ENCODE measurements at regions of chr1 and their contacts with region 1.

Region 1: DNA sequence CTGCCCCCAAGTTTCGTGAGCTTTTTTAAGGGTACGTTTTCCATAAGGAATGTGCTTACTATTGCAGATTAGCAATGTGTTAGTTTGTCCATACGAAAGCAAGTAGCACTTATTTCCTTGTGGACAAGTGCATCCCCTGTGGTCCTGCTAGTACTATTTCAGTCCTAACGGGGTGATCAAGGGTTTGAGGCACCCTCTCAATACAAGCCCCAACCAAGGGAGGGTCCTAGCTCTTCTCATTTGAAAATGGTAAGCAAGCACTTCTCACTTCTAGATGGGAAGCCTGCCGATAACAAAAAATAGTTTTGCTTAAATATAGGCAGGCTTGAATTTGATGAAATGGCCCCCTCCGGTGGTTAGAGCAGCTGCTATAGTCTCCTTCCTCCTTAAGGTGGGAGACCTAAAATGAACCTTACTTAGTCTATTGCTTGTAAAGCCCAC is 64.0 kb upstream of the HMCN1 start:
- DNase-seq: peak in 2 of 3 donors; percentile 29 to 68
- ATAC-seq: peak; percentile 52 to 65
- H3K4me3 ChIP-seq: no peak overlapping the region
- H3K27ac ChIP-seq: no peak overlapping the region
- H3K4me1 ChIP-seq: peaks cover 3% of the 10 kb centered on the region
- H3K27me3 ChIP-seq: no peaks in the 10 kb centered on the region

Region 2: DNA sequence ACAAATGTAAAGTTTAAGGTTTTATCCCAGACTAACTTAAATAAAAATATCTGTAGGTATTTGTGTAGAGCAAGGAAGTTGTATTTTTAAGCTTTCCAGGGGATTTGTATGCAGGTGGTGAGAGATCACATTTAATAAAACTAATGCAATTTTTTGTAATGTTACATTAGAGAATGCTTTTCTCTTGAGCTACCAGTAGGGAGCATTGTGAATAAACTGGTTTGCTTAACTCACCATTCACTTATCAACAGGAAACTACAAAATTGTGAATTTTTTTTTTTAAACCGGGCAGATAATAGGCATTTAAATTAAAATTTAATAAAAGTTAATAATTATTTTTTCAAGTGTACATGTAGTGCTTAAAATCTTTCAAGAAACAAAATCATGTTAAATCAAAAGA is 431.8 kb before region 1 on chr1:
- intact Hi-C with region 1: loop called in 2 of 4 experiments (anchors 10 kb)
- DNase-seq: no peak
- ATAC-seq: no peak
- H3K4me3 ChIP-seq: no peak overlapping the region
- H3K27ac ChIP-seq: no peak overlapping the region
- H3K4me1 ChIP-seq: no peaks in the 10 kb centered on the region
- H3K27me3 ChIP-seq: no peaks in the 10 kb centered on the region

Region 3: GRCh38 chr1:185244015-185244747 is 426.0 kb before region 1 on chr1:
- intact Hi-C with region 1: loop called in 2 of 4 experiments (anchors 10 kb)
- DNase-seq: no peak
- ATAC-seq: no peak
- H3K4me3 ChIP-seq: no peak overlapping the region
- H3K27ac ChIP-seq: no peak overlapping the region
- H3K4me1 ChIP-seq: no peaks in the 10 kb centered on the region
- H3K27me3 ChIP-seq: no peaks in the 10 kb centered on the region

Region 4: GRCh38 chr1:185317034-185317885 is 352.9 kb before region 1 on chr1 and contains the start of gene IVNS1ABP:
- intact Hi-C with region 1: loop called in 2 of 4 experiments (anchors 5 to 10 kb)
- DNase-seq: peak; percentile 95 to 98 (median 97)
- ATAC-seq: peak; percentile 94 to 95
- H3K4me3 ChIP-seq: peak within 1 kb of the TSS; percentile 64
- H3K27ac ChIP-seq: peak within 1 kb of the TSS; percentile 92
- H3K4me1 ChIP-seq: no peaks in the 10 kb centered on the region
- H3K27me3 ChIP-seq: no peaks in the 10 kb centered on the region
- total RNA-seq, gene IVNS1ABP: 36.7 to 37.4 (median 37.1) TPM

Region 5: DNA sequence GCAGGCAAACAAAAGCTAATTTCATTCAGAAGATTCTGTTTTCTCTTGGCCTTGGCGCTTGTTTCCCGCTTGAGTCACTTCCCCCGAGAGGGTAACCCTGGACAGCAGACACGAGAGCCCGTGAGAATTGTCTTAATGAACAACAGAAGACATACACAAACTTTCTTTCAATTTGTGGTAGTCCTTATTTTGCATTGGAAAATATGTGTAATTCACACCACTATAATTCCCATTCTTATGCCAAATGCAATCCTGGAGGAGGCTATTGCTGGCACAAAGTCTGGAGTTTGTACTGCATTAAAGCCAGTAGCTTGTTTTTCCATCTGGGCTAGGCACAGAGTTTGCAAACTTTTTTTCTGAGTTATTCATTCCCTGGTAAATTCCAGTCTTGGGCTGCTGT is 243.4 kb before region 1 on chr1:
- intact Hi-C with region 1: loop called in 1 of 4 experiments (anchors 10 kb)
- DNase-seq: peak; percentile 38 to 71 (median 67)
- ATAC-seq: peak; percentile 87 to 92
- H3K4me3 ChIP-seq: no peak overlapping the region
- H3K27ac ChIP-seq: no peak overlapping the region
- H3K4me1 ChIP-seq: no peaks in the 10 kb centered on the region
- H3K27me3 ChIP-seq: no peaks in the 10 kb centered on the region

Region 6: DNA sequence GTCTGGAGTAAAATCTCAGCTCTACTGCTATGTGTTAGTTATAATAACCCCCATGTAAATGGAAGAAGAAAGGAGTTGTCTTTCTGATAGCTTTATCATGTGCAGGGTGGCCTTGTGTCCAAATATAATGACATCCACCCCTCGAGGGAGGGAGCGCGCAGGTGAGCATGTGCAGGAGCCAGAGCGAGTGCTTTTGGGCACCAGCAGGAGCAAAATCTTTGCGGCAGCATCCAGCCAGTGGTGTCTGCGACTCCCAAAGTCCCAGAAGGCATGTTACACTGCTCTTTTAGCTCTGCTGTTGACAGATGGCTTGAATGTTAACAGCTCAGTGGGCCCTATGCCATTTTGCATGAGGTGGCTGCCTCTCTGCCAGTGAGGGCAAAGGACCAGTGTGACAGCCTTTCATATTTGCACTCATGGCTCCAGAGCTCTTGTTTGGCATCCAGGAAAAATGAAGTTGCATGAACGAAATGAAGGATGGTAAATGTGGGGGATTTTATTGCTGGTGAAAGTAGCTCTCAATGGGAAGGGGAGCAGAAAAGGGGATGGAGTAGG is 210.6 kb after region 1 on chr1:
- intact Hi-C with region 1: no loop called
- DNase-seq: peak; percentile 28 to 64 (median 43)
- ATAC-seq: peak; percentile 85 to 88
- H3K4me3 ChIP-seq: no peak overlapping the region
- H3K27ac ChIP-seq: no peak overlapping the region
- H3K4me1 ChIP-seq: no peaks in the 10 kb centered on the region
- H3K27me3 ChIP-seq: no peaks in the 10 kb centered on the region

Region 7: DNA sequence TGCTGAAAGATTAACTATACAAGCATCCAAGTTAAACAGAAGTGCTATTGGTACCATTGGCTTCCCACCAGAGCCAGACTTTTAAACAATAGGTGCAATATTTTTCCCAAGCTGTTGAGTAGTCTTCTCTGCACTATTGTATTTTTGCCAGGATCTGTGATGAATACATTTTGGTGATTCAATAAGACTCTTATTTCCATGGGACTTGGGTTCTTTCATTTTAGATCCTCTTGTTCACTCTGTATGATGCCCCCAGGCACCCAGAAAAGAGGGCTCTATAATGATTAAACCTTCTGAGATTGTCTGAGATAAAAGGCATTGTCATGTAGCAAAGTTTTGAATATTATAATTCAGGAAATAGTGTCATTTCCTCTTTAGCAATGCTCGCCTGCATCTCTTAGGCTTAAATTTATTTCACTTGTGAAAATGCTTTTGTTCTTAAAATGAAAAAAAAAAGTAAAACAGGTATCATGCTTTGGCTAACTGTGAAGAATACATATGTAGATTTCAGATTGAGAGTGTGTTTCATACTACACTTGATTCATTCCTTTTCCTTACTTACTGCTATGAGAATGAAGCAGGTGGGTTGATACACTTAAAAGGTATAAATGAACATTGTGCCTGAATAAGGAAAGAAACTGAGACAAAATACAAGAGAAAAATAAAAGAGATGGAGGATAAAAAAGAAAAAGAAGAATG is 339.0 kb after region 1 on chr1:
- intact Hi-C with region 1: no loop called
- DNase-seq: no peak
- ATAC-seq: peak in 1 of 2 donors; percentile 91
- H3K4me3 ChIP-seq: no peak overlapping the region
- H3K27ac ChIP-seq: no peak overlapping the region
- H3K4me1 ChIP-seq: no peaks in the 10 kb centered on the region
- H3K27me3 ChIP-seq: no peaks in the 10 kb centered on the region